H1 (cell line): ENCODE measurements at regions of chr14 and their contacts with region 1.

Region 1: GRCh38 chr14:24080888-24081738 is 9.8 kb downstream of the CPNE6 start:
- DNase-seq: peak in 1 of 2 experiments; percentile 81
- H3K4me3 ChIP-seq: peak overlapping the region; percentile 54 to 67 (median 66)
- H3K27ac ChIP-seq: no peak overlapping the region
- H3K4me1 ChIP-seq: peaks cover 0 to 18% (median 12%) of the 10 kb centered on the region in 4 experiments; a peak in 6 of 7 replicates
- H3K27me3 ChIP-seq: peaks cover 0 to 10% (median 7%) of the 10 kb centered on the region in 4 experiments; a peak in 5 of 7 replicates
- CTCF ChIP-seq: no peak
- EP300 ChIP-seq: no peak
- POLR2A ChIP-seq: peak in 1 of 2 experiments; percentile 50; a peak in 1 of 3 replicates
- RAD21 ChIP-seq: no peak

Region 2: GRCh38 chr14:24051789-24052655 is 29.1 kb before region 1 on chr14 and contains the start of gene CARMIL3:
- CTCF ChIA-PET with region 1: interaction called, 61 read pairs
- POLR2A ChIA-PET with region 1: interaction called, 24 read pairs
- DNase-seq: peak in 1 of 2 experiments; percentile 89
- H3K4me3 ChIP-seq: peak within 1 kb of the TSS; percentile 56 to 82 (median 80)
- H3K27ac ChIP-seq: no peak within 1 kb of the TSS
- H3K4me1 ChIP-seq: peaks cover 0 to 10% (median 5%) of the 10 kb centered on the region in 4 experiments; a peak in 5 of 7 replicates
- H3K27me3 ChIP-seq: no peaks in the 10 kb centered on the region; a peak in 1 of 7 replicates
- CTCF ChIP-seq: no peak
- EP300 ChIP-seq: peak in 1 of 2 experiments; percentile 25; a peak in 1 of 3 replicates
- POLR2A ChIP-seq: no peak; a peak in 2 of 3 replicates
- RAD21 ChIP-seq: no peak
- total RNA-seq, gene CARMIL3: 8.5 and 9.0 TPM in 2 replicates

Region 3: DNA sequence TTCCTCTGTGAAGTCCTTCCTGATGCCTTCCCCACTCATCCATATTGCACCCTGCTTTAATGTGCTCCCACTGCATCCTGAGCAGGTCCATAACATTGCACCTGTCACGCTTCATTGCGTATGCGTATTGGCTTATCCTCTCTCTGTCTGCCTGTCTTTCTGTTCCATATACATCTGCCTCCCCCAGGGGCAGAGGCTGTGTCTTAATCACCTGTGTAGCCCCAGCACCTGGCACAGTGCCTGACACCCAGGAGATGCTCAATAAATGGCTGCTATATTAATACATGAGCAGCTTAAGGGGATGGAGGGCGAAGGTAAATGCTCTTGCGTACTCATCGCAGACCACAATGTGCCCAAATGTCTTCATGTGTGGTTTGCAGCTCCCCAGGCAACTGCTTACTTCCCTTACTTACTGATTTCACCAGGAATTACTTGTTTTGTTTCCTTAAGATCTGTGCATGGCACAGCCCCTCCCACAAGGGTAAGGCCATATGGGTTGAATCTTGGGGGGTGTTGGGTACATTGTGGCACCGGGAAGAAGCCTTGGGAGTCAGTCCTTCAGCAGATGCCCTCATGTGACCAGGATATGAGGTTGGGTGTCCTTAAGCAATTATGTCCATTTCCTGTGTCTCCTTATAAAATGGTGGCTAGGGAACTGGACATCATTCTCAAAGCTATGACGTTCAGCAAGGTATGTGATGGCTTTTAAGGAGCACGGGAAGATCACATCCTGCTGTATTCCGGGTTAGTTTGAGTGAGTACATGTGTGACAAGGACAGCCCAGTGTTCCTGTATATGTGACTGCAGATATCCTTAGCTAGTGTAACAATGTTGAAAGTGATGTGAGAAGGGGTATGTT is 10.6 kb before region 1 on chr14:
- CTCF ChIA-PET with region 1: interaction called, 16 read pairs
- POLR2A ChIA-PET with region 1: interaction called, 36 read pairs
- DNase-seq: no peak
- H3K4me3 ChIP-seq: no peak overlapping the region
- H3K27ac ChIP-seq: no peak overlapping the region
- H3K4me1 ChIP-seq: no peaks in the 10 kb centered on the region
- H3K27me3 ChIP-seq: no peaks in the 10 kb centered on the region; a peak in 1 of 7 replicates
- CTCF ChIP-seq: no peak
- EP300 ChIP-seq: no peak
- POLR2A ChIP-seq: no peak
- RAD21 ChIP-seq: no peak

Region 4: DNA sequence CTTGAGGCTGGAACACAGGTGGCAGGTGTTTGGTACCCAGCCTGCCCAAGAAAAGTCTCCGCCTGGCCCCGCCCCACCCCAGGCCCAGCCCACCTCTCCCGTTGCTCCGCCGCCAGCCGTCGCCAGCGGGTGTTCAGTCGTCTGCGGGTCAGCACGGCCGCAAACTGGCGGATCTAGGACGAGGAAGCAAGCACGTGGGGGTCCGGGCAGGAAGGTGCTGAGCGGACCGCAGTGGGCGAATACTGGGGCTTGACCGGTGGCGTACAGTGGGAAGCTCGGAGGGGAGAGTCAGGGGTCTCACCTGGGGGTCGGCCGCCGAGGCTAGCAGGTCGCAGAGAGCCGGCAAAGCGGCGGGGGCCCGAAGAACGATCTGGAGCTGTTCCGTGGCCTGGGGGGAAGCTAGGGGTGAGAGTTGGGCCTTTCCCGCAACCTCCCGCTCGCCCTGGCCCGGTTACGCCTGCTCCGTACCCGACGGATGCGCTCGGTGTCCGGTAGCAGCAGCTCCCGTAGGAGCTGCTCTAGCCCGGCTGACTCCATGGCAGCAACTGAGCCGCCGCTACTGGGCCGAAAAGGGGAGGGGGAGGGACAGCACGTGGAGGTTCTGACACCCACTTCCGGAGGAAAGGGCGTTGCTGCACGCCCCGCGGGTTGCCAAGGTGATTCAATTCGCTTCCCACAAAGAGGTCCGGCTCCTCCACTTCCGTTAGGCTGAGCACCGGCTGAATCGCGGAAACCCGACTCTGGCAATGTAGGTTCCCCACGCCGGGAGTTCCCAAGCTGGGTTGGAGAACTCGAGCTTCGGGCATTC is 107.3 kb after region 1 on chr14 and contains the start of gene IPO4:
- CTCF ChIA-PET with region 1: no interaction called
- POLR2A ChIA-PET with region 1: no interaction called
- DNase-seq: peak; percentile 93 to 95
- H3K4me3 ChIP-seq: peak within 1 kb of the TSS; percentile 75 to 91 (median 87)
- H3K27ac ChIP-seq: peak within 1 kb of the TSS; percentile 58; the same call in 1 of the 2 replicates
- H3K4me1 ChIP-seq: peaks cover 0 to 7% (median 4%) of the 10 kb centered on the region in 4 experiments; a peak in 6 of 7 replicates
- H3K27me3 ChIP-seq: no peaks in the 10 kb centered on the region
- CTCF ChIP-seq: no peak; a peak in 1 of 4 replicates
- EP300 ChIP-seq: peak in 1 of 2 experiments; percentile 93; a peak in 1 of 3 replicates
- POLR2A ChIP-seq: peak in 1 of 2 experiments; percentile 91; a peak in 2 of 3 replicates
- RAD21 ChIP-seq: peak; percentile 24 to 37; a peak in 2 of 4 replicates
- total RNA-seq, gene IPO4: 108 and 109 TPM in 2 replicates